ENCODE measurements at regions of chr5 and their contacts with region 1.

Region 1: GRCh38 chr5:154972476-154973080 is 31.7 kb downstream of the MRPL22 start:
- DNase-seq: no peak
- H3K4me3 ChIP-seq: no peak overlapping the region
- H3K27me3 ChIP-seq: no peaks in the 10 kb centered on the region
- CTCF ChIP-seq: peak; percentile 73

Region 2: GRCh38 chr5:154986151-154986550 is 13.6 kb after region 1 on chr5:
- CTCF ChIA-PET with region 1: interaction called, 13 read pairs
- POLR2A ChIA-PET with region 1: no interaction called
- DNase-seq: no peak
- H3K4me3 ChIP-seq: no peak overlapping the region
- H3K27me3 ChIP-seq: no peaks in the 10 kb centered on the region; the same call in 1 of the 2 replicates
- CTCF ChIP-seq: no peak

Region 3: GRCh38 chr5:155103146-155103545 is 130.6 kb after region 1 on chr5:
- CTCF ChIA-PET with region 1: no interaction called
- POLR2A ChIA-PET with region 1: no interaction called
- DNase-seq: no peak
- H3K4me3 ChIP-seq: no peak overlapping the region
- H3K27me3 ChIP-seq: no peaks in the 10 kb centered on the region; the same call in 1 of the 2 replicates
- CTCF ChIP-seq: no peak

Region 4: GRCh38 chr5:155136216-155136850 is 163.8 kb after region 1 on chr5:
- CTCF ChIA-PET with region 1: interaction called, 15 read pairs
- POLR2A ChIA-PET with region 1: no interaction called
- DNase-seq: no peak
- H3K4me3 ChIP-seq: no peak overlapping the region
- H3K27me3 ChIP-seq: no peaks in the 10 kb centered on the region; the same call in 1 of the 2 replicates
- CTCF ChIP-seq: no peak

Region 5: DNA sequence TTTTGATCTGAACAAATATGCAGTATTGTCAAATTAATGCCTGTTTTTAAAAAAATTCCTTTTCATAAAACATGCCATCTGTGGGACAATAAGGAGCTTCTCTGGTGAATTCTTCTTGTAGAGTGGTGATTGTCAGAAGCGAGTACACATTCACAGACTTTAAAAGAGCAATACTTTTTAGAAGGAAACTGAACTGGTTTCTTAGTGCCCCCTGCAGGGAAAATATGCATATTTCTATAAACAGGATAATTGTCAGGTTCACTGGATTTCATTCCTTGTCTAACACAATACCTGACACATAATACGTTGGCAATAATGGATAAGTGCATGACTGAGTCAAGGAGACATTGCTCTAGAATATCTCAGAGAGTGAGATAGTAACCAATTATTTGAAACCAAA is 174.6 kb after region 1 on chr5:
- CTCF ChIA-PET with region 1: interaction called, 38 read pairs
- POLR2A ChIA-PET with region 1: no interaction called
- DNase-seq: no peak
- H3K4me3 ChIP-seq: no peak overlapping the region
- H3K27me3 ChIP-seq: no peaks in the 10 kb centered on the region
- CTCF ChIP-seq: peak; percentile 28

Region 6: GRCh38 chr5:155250596-155250995 is 278.0 kb after region 1 on chr5:
- CTCF ChIA-PET with region 1: no interaction called
- POLR2A ChIA-PET with region 1: no interaction called
- DNase-seq: no peak
- H3K4me3 ChIP-seq: no peak overlapping the region
- H3K27me3 ChIP-seq: no peaks in the 10 kb centered on the region
- CTCF ChIP-seq: no peak